SK-N-SH (cell line): ENCODE measurements at regions of chr2 and their contacts with region 1.

Region 1: GRCh38 chr2:65129826-65130663 is at the start of gene RAB1A:
- DNase-seq: peak; percentile 97
- H3K4me3 ChIP-seq: peak within 1 kb of the TSS; percentile 85 to 91
- H3K27ac ChIP-seq: peak within 1 kb of the TSS; percentile 87 to 97
- H3K4me1 ChIP-seq: peaks cover 6 to 8% of the 10 kb centered on the region in 2 experiments; a peak in 3 of 4 replicates
- H3K27me3 ChIP-seq: no peaks in the 10 kb centered on the region
- CTCF ChIP-seq: peak; percentile 21; the same call in 1 of the 2 replicates
- EP300 ChIP-seq: no peak
- RAD21 ChIP-seq: peak; percentile 25; the same call in 1 of the 2 replicates
- polyA plus RNA-seq, gene RAB1A: 111 and 113 TPM in 2 replicates

Region 2: GRCh38 chr2:65056215-65057053 is 73.6 kb before region 1 on chr2 and contains the start of gene CEP68:
- CTCF ChIA-PET with region 1: interaction called, 5 read pairs
- POLR2A ChIA-PET with region 1: interaction called, 13 read pairs
- DNase-seq: peak; percentile 97
- H3K4me3 ChIP-seq: peak within 1 kb of the TSS; percentile 74 to 82
- H3K27ac ChIP-seq: peak within 1 kb of the TSS; percentile 45 to 73; a peak in 3 of 4 replicates
- H3K4me1 ChIP-seq: peaks cover 0 to 3% of the 10 kb centered on the region in 2 experiments; a peak in 1 of 4 replicates
- H3K27me3 ChIP-seq: no peaks in the 10 kb centered on the region
- CTCF ChIP-seq: no peak
- EP300 ChIP-seq: no peak
- RAD21 ChIP-seq: no peak
- polyA plus RNA-seq, gene CEP68: 6.2 and 7.8 TPM in 2 replicates

Region 3: DNA sequence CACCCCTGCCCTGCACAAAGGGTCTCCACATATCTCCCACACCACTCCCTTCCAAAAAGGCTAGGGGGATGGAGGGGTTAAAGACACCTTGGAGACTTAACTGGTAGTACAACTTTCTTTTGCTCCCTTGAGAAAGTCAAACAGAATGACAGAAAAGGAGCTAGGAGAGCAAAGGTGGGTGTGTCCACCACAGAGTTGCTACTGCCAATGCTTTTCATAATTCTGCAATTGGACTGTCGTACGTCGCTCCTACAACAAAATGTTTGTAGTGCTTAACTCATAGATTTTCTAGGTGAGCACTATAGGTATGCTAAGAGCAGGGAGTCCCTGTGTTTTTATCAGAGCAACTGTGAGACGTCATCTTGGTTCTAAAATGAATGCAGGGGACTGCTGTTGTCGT is 46.9 kb before region 1 on chr2:
- CTCF ChIA-PET with region 1: no interaction called
- POLR2A ChIA-PET with region 1: no interaction called
- DNase-seq: no peak
- H3K4me3 ChIP-seq: no peak overlapping the region
- H3K27ac ChIP-seq: no peak overlapping the region
- H3K4me1 ChIP-seq: no peaks in the 10 kb centered on the region
- H3K27me3 ChIP-seq: no peaks in the 10 kb centered on the region
- CTCF ChIP-seq: no peak
- EP300 ChIP-seq: no peak
- RAD21 ChIP-seq: no peak